ENCODE measurements at regions of chr5 and their contacts with region 1.

Region 1: GRCh38 chr5:152271420-152271819 is 133.7 kb downstream of the NMUR2 start:
- DNase-seq: peak; percentile 87
- ATAC-seq: peak; percentile 91
- H3K4me3 ChIP-seq: no peak overlapping the region
- H3K27ac ChIP-seq: no peak overlapping the region
- H3K4me1 ChIP-seq: no peaks in the 10 kb centered on the region; the same call in 1 of the 2 replicates
- H3K27me3 ChIP-seq: no peaks in the 10 kb centered on the region
- CTCF ChIP-seq: peak; percentile 95

Region 2: DNA sequence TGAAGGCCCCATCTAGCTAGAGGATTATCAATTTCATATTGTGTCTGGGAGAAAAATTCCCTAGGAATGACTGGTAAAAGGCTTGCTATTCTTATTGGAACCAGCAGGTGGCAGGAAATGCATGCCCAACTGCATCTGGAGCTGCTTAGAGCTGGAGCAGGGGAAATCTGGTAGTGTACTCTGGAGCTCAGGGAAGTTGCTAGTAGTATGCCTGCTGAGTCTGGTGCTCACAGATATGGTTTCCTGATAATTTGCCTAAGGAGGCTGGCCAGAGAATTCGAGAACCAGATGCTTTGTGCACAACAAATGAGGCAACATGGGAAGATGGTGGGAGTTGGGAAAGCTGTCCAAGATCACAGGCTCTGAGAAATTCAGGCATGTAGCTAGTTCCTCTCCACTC is 446.0 kb before region 1 on chr5:
- CTCF ChIA-PET with region 1: interaction called, 11 read pairs
- POLR2A ChIA-PET with region 1: no interaction called
- intact Hi-C with region 1: loop called (anchors 1 kb)
- DNase-seq: peak; percentile 84
- ATAC-seq: peak; percentile 81
- H3K4me3 ChIP-seq: no peak overlapping the region
- H3K27ac ChIP-seq: no peak overlapping the region
- H3K4me1 ChIP-seq: no peaks in the 10 kb centered on the region
- H3K27me3 ChIP-seq: no peaks in the 10 kb centered on the region
- CTCF ChIP-seq: peak; percentile 94

Region 3: GRCh38 chr5:152142840-152143469 is 128.5 kb before region 1 on chr5:
- CTCF ChIA-PET with region 1: no interaction called
- POLR2A ChIA-PET with region 1: no interaction called
- intact Hi-C with region 1: loop called (anchors 1 kb)
- DNase-seq: peak; percentile 74
- ATAC-seq: peak; percentile 78
- H3K4me3 ChIP-seq: no peak overlapping the region
- H3K27ac ChIP-seq: no peak overlapping the region
- H3K4me1 ChIP-seq: peaks cover 9% of the 10 kb centered on the region; the same call in 1 of the 2 replicates
- H3K27me3 ChIP-seq: no peaks in the 10 kb centered on the region
- CTCF ChIP-seq: peak; percentile 87

Region 4: DNA sequence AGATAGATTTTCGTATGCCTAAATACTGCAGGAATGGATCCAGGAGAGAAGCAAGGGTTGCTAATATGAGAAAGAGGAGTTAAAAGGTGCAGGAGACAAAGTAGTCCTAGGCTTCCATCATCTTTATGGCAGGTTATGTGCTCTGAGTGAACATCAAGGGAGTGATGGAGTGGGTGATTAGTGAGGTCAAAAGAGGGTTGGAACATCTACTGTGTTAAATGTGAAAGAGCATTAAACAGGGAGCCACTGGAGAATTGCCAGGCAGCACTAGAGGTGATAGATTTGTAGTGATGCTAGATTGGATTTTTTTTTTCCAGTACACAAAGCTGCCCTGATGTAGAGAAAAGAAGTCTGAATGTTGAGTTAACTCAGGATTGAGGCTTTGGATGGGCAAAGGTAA is 65.6 kb before region 1 on chr5:
- CTCF ChIA-PET with region 1: no interaction called
- POLR2A ChIA-PET with region 1: no interaction called
- intact Hi-C with region 1: loop called (anchors 2 kb)
- DNase-seq: no peak
- ATAC-seq: no peak
- H3K4me3 ChIP-seq: no peak overlapping the region
- H3K27ac ChIP-seq: no peak overlapping the region
- H3K4me1 ChIP-seq: peaks cover 13% of the 10 kb centered on the region
- H3K27me3 ChIP-seq: no peaks in the 10 kb centered on the region
- CTCF ChIP-seq: no peak

Region 5: DNA sequence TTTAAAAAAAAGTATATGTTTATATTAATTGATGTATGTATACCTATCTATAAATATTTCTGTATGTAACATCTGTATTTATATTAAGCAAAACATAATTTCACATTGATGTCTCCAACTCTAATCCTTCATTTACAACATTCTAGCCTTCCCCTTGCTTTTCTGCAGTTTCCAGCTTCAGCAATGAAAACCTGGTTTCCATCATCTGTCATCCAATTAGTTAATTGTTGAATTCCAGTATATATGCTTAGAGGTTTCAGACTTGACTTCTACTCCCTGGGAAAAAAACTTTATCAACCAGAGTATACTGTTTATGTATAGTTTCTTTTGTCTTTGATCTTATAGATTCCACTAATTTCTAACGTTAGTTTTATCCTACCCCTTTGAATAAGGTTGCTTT is 95.3 kb after region 1 on chr5:
- CTCF ChIA-PET with region 1: no interaction called
- POLR2A ChIA-PET with region 1: no interaction called
- intact Hi-C with region 1: no loop called
- DNase-seq: no peak
- ATAC-seq: no peak
- H3K4me3 ChIP-seq: no peak overlapping the region
- H3K27ac ChIP-seq: no peak overlapping the region
- H3K4me1 ChIP-seq: no peaks in the 10 kb centered on the region
- H3K27me3 ChIP-seq: no peaks in the 10 kb centered on the region
- CTCF ChIP-seq: no peak

Region 6: GRCh38 chr5:152379331-152379730 is 107.9 kb after region 1 on chr5:
- CTCF ChIA-PET with region 1: no interaction called
- POLR2A ChIA-PET with region 1: no interaction called
- intact Hi-C with region 1: loop called (anchors 1 kb)
- DNase-seq: peak; percentile 27
- ATAC-seq: peak; percentile 62
- H3K4me3 ChIP-seq: no peak overlapping the region
- H3K27ac ChIP-seq: no peak overlapping the region
- H3K4me1 ChIP-seq: peaks cover 15% of the 10 kb centered on the region
- H3K27me3 ChIP-seq: no peaks in the 10 kb centered on the region
- CTCF ChIP-seq: peak; percentile 49

Region 7: DNA sequence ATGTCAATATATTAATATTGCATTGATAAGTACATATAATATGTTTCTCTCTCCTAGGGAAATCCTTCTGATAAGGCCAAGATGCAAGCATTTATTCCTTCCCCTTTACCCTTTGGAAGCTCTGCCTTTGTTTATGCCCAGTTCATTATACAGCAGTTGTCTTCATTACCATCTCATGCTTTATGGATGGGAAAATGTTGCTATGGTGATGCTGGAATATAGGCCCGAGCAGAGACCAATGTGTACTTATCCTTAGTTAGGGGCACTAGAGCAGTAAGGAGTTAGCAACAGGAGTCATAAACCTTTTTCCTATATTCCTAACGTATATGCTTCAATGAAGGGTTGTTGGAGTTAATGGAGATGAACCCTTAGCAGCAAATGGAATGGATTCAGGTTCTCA is 153.1 kb after region 1 on chr5:
- CTCF ChIA-PET with region 1: no interaction called
- POLR2A ChIA-PET with region 1: no interaction called
- intact Hi-C with region 1: no loop called
- DNase-seq: no peak
- ATAC-seq: no peak
- H3K4me3 ChIP-seq: no peak overlapping the region
- H3K27ac ChIP-seq: no peak overlapping the region
- H3K4me1 ChIP-seq: no peaks in the 10 kb centered on the region
- H3K27me3 ChIP-seq: 0 out of 2 replicates have a peak, but pooled peaks cover 2% of the 10 kb centered on the region
- CTCF ChIP-seq: no peak

Measured in PC-3 (cell line).